ENCODE measurements at regions of chr19 and their contacts with region 1.

Region 1: GRCh38 chr19:38335949-38336637 is 463 bp downstream of the CATSPERG start:
- DNase-seq: peak; percentile 94 to 99 (median 98)
- H3K4me3 ChIP-seq: peak overlapping the region; percentile 32 to 89 (median 62)
- H3K27ac ChIP-seq: peak overlapping the region; percentile 81 to 97 (median 94)
- H3K4me1 ChIP-seq: peaks cover 0 to 5% of the 10 kb centered on the region in 2 donors
- H3K27me3 ChIP-seq: no peaks in the 10 kb centered on the region
- CTCF ChIP-seq: no peak
- POLR2A ChIP-seq: peak in 1 of 2 donors; percentile 67

Region 2: GRCh38 chr19:38229585-38230073 is 106.5 kb before region 1 on chr19:
- intact Hi-C with region 1: loop called in 1 of 2 experiments (anchors 2 kb)
- DNase-seq: peak; percentile 40 to 73 (median 49)
- H3K4me3 ChIP-seq: no peak overlapping the region
- H3K27ac ChIP-seq: no peak overlapping the region
- H3K4me1 ChIP-seq: peaks cover 8 to 9% of the 10 kb centered on the region in 2 donors
- H3K27me3 ChIP-seq: peaks cover 42% of the 10 kb centered on the region
- CTCF ChIP-seq: no peak
- POLR2A ChIP-seq: no peak

Region 3: DNA sequence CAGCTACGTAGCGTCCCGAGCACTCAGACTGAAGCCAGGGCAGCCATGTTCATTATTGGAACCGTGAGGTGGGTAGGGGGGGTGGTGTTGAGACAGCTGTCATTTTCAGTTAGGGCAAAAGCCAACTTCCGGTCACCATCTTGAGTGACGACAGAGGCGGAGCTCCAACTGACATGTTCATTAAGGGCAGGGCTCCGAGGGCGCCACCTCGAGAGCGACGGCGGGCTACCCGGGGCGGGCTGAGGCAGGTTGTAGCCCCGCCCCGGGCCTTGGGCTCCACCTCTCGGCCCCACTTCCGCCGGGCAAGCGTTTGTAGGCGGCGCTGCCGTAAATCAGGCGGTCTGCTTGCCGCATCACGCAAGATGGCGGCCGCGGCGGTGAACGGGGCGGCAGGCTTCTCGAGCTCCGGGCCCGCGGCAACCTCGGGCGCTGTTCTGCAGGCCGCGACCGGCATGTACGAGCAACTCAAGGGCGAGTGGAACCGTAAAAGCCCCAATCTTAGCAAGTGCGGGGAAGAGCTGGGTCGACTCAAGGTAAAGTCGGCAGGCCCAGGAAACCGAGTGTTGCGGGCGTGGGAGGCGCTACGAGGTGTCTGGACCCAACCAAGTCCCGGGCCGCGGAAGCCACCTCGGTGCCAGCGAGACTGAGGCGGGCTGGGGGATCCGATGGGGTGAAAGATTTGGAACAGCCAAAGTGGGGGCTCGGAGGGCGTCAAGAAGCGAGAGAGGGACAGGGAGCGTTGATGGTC is 38.5 kb after region 1 on chr19 and contains the start of gene PSMD8:
- intact Hi-C with region 1: loop called in 1 of 2 experiments (anchors 5 kb)
- DNase-seq: peak; percentile 98 to 100 (median 99)
- H3K4me3 ChIP-seq: peak within 1 kb of the TSS; percentile 26 to 76 (median 67)
- H3K27ac ChIP-seq: peak within 1 kb of the TSS in 4 of 5 donors; percentile 75 to 95 (median 89)
- H3K4me1 ChIP-seq: peaks cover 13 to 21% of the 10 kb centered on the region in 2 donors
- H3K27me3 ChIP-seq: no peaks in the 10 kb centered on the region
- CTCF ChIP-seq: peak in 3 of 6 experiments; percentile 1 to 10 (median 4)
- POLR2A ChIP-seq: peak; percentile 90 to 97
- total RNA-seq, gene PSMD8: 121 to 330 (median 211) TPM

Measured in adrenal gland (tissue), 19 donors.